AG04449 (cell line): ENCODE measurements at regions of chr17 and their contacts with region 1.

Region 1: GRCh38 chr17:75271233-75271954 is 363 bp upstream of the MIF4GD start:
- DNase-seq: no peak
- H3K4me3 ChIP-seq: peak overlapping the region; percentile 71
- CTCF ChIP-seq: peak; percentile 68

Region 2: GRCh38 chr17:75096082-75096625 is 175.2 kb before region 1 on chr17:
- CTCF ChIA-PET with region 1: no interaction called
- POLR2A ChIA-PET with region 1: no interaction called
- DNase-seq: no peak
- H3K4me3 ChIP-seq: no peak overlapping the region
- CTCF ChIP-seq: no peak

Region 3: DNA sequence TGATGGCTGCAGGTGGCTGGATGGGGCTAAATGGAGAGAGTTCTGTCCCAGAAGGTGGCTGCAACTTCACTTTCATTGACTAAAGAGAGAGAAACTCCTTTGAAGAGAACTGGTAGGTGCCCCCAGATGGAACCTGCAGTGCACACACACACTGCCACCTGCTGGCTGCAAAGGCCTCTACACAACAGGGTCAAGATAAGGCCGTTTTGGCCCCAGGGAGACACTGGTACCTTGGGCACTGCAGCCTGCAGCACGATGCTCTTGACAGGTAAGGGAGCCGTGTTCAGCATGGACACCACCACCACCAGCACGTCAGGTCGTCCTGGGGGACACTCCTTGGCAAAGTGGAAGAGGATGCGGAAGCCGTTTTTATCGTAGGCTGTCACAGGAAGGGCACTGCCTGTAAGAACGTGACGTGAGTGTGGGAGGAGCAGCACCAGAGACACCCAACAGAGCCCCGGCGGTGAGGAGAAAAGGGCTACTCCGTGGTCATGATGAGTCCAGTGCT is 32.7 kb before region 1 on chr17:
- CTCF ChIA-PET with region 1: interaction called, 30 read pairs
- POLR2A ChIA-PET with region 1: interaction called, 4 read pairs
- DNase-seq: no peak
- H3K4me3 ChIP-seq: no peak overlapping the region
- CTCF ChIP-seq: peak; percentile 89

Region 4: GRCh38 chr17:75289115-75289831 is 17.9 kb after region 1 on chr17 and contains the start of gene SLC25A19:
- CTCF ChIA-PET with region 1: interaction called, 76 read pairs
- POLR2A ChIA-PET with region 1: interaction called, 23 read pairs
- DNase-seq: peak; percentile 90
- H3K4me3 ChIP-seq: peak within 1 kb of the TSS; percentile 92
- CTCF ChIP-seq: no peak

Region 5: DNA sequence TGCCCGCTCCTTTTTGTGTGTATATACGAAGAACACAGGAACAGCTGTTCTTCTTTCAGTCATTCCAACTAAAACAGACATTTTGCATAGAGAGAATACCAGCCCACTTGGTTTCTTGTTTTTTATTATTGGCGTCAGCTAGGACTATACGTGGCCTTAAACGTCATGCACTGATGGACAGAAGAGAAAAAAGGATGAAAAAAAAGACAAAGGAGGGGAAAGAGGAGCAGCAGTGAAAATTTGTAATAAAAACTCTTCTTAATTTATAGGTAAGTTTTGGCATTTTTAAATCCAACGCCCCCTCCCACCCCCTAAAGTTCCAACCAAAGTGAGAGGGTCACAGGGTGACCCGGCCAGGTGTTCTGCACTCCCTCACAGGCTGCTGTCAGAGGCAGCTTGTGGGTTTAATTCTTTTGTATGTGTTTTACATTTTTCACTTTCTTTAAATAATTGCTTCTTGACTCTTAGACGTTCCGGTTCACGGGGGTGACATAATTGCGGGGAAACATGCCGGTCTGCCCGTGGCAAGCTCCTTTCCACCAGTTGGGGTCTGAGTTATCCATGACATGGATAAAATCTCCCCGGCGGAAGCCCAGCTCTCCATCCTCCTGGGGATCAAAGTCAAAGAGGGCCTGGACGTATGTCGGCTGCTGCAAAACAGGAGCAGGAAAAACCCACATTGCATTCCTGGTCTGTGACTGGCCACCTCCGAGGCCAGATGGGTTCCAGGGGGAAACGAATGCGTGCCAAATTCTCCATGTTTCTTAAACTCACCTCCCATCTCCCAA is 48.7 kb after region 1 on chr17:
- CTCF ChIA-PET with region 1: interaction called, 24 read pairs
- POLR2A ChIA-PET with region 1: no interaction called
- DNase-seq: no peak
- H3K4me3 ChIP-seq: no peak overlapping the region
- CTCF ChIP-seq: no peak

Region 6: DNA sequence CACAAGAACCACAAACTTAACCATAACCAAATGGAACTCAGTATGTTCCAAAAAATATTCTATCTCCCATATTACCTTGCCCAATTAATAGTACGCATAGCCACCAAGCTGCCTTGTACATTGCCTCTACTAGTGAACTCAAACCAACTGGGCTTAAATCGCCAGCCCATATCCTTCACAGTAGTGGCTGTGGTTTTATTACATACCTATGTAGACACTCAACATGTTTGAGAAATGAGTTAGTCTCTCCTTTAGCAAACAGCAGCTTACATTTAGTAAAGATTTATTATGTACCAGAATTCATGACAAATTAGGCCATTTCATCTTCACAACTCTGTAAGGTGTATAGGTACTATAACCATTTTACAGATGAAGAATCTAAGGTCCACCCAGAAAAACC is 92.7 kb after region 1 on chr17:
- CTCF ChIA-PET with region 1: interaction called, 10 read pairs
- POLR2A ChIA-PET with region 1: no interaction called
- DNase-seq: peak; percentile 54
- H3K4me3 ChIP-seq: no peak overlapping the region
- CTCF ChIP-seq: no peak

Region 7: GRCh38 chr17:75400326-75400939 is 129.0 kb after region 1 on chr17:
- CTCF ChIA-PET with region 1: interaction called, 55 read pairs
- POLR2A ChIA-PET with region 1: interaction called, 12 read pairs
- DNase-seq: no peak
- H3K4me3 ChIP-seq: no peak overlapping the region
- CTCF ChIP-seq: no peak

Region 8: DNA sequence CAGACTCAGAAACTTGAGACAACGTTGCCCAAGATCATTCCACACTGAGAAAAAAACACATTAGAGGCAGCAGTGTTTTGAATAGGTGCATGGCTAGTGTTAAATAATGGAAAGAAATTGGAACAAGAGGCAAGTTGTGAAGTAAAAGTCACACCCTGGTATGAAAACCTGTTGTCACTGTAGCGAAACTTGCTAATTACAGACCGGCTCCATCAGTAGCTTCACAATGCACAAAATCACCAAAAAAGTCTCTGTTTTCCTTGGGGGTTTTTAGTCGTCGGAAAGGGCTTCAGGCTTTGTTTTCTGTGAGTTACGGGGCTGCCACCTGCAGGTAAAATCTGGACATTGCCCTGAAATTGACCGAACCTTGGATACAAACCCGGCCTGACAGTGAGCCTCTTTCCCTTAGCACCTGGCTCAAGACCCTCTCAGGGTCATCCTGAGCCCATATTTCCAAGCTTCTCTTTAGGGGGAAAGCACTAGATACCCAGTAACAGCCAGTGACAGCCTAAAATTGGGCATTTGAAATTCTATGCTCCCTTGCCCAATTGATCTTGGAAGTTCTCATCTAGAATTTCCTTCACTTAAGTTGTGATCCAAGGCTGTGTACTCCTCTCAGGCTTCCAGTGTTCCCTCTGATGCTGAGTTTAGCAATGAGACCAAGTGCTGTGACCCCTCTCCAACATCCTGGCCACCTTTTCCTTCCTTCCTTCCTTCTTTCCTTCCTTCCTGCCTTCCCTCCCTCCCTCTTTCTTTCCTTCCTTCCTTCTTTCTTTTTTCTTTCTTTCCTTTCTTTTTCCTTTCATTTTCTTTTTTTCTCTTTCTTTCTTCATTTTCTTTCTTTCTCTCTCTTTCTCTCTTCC is 141.3 kb after region 1 on chr17:
- CTCF ChIA-PET with region 1: interaction called, 41 read pairs
- POLR2A ChIA-PET with region 1: no interaction called
- DNase-seq: no peak
- H3K4me3 ChIP-seq: peak overlapping the region; percentile 20
- CTCF ChIP-seq: peak; percentile 83